Caco-2 (cell line): ENCODE measurements at regions of chr3 and their contacts with region 1.

Region 1: DNA sequence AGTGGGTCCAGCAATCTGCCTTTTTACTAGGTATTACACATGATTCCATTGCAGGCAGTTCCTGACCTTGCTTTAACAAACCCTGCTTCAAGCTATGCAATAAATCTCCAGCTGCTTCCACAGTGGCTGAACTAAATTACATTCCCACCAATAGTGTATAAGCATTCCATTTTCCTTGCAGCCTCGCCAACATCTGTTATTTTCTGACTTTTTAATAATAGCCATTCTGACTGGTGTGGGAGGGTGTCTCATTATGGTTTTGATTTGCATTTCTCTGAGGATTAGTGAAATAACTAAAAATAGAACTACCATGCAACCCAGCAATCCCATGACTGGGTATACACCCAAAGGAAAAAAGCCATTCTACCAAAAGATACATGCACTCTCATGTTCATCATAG is 36.4 kb upstream of the DNAJC13 start:
- DNase-seq: no peak
- H3K4me3 ChIP-seq: no peak overlapping the region
- H3K4me3 Mint-ChIP-seq: no peak overlapping the region
- H3K27ac Mint-ChIP-seq: no peak overlapping the region
- H3K4me1 ChIP-seq: no peaks in the 10 kb centered on the region
- H3K4me1 Mint-ChIP-seq: no peaks in the 10 kb centered on the region
- H3K27me3 ChIP-seq: no peaks in the 10 kb centered on the region
- H3K27me3 Mint-ChIP-seq: no peaks in the 10 kb centered on the region
- CTCF ChIP-seq: no peak

Region 2: GRCh38 chr3:132360717-132361116 is 20.2 kb before region 1 on chr3:
- CTCF ChIA-PET with region 1: no interaction called
- POLR2A ChIA-PET with region 1: no interaction called
- intact Hi-C with region 1: loop called (anchors 2 kb)
- DNase-seq: no peak
- H3K4me3 ChIP-seq: no peak overlapping the region
- H3K4me3 Mint-ChIP-seq: no peak overlapping the region
- H3K27ac Mint-ChIP-seq: no peak overlapping the region
- H3K4me1 ChIP-seq: peaks cover 5% of the 10 kb centered on the region; the same call in 1 of the 2 replicates
- H3K4me1 Mint-ChIP-seq: peaks cover 14% of the 10 kb centered on the region
- H3K27me3 ChIP-seq: no peaks in the 10 kb centered on the region
- H3K27me3 Mint-ChIP-seq: no peaks in the 10 kb centered on the region
- CTCF ChIP-seq: no peak